OCI-LY7 (cell line): ENCODE measurements at regions of chr9 and their contacts with region 1.

Region 1: DNA sequence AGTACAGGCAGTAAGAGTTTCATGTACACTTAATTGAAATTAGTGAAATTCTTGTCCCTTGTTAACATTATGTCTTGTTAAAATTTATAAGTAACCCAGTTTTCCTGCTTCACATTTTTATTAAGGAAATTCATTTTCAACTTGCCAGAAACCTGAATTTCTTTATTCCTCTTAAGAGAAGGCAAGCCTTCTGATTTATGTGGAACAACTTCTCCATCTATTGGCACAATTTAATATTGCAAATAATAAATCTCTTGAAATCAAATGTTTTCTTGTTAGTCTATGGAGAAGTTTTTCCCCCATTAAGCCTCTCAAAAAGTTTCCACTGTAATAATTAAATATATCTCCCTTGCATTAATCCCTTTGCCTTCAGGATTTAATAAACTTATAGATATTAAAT is 33.8 kb upstream of the ACO1 start:
- DNase-seq: peak; percentile 18
- H3K4me3 ChIP-seq: no peak overlapping the region
- H3K27ac ChIP-seq: no peak overlapping the region
- H3K4me1 ChIP-seq: no peaks in the 10 kb centered on the region
- CTCF ChIP-seq: peak; percentile 75

Region 2: DNA sequence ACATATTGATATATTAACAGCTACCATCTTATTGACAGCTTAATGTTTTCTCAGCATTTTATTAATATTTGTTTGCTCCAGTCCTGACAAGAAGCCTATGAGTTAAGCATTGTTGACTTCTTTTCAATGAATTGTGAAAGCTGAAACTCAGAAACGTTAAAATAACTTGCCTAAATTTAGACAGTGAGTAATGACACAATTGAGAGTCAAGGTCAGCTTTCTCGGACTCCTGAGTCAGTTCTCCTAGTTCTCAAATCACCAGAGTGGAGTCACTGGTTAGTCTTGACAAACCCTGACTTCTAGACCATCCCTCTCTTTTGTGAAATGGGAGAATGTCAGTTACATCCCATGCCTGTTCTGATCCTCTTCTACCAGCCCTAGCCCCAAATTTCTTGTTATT is 189.0 kb before region 1 on chr9:
- CTCF ChIA-PET with region 1: no interaction called
- POLR2A ChIA-PET with region 1: no interaction called
- intact Hi-C with region 1: no loop called
- DNase-seq: no peak
- H3K4me3 ChIP-seq: no peak overlapping the region
- H3K27ac ChIP-seq: no peak overlapping the region
- H3K4me1 ChIP-seq: no peaks in the 10 kb centered on the region
- CTCF ChIP-seq: no peak

Region 3: DNA sequence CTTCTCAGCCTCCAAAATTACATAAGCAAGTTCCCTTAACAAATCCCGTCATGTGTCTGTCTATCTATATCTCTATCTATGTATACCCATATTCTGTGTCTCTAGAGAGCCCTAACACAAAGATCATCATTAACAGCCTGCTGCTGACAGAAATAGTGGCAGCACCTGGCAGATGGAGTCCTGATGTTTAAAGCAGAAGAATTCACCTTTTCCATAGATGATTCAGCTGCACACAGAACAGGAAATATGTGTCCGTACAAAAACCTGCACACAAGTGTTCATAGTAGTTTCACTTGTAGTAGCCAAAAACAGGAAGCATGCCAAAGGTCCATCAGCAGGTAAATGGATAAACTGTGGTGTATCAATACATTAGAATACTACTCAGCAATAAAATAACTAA is 11.3 kb before region 1 on chr9:
- CTCF ChIA-PET with region 1: no interaction called
- POLR2A ChIA-PET with region 1: no interaction called
- intact Hi-C with region 1: no loop called
- DNase-seq: peak; percentile 7
- H3K4me3 ChIP-seq: no peak overlapping the region
- H3K27ac ChIP-seq: no peak overlapping the region
- H3K4me1 ChIP-seq: peaks cover 10% of the 10 kb centered on the region
- CTCF ChIP-seq: no peak

Region 4: GRCh38 chr9:32472344-32472743 is 121.7 kb after region 1 on chr9:
- CTCF ChIA-PET with region 1: no interaction called
- POLR2A ChIA-PET with region 1: no interaction called
- intact Hi-C with region 1: loop called (anchors 10 kb)
- DNase-seq: no peak
- H3K4me3 ChIP-seq: no peak overlapping the region
- H3K27ac ChIP-seq: no peak overlapping the region
- H3K4me1 ChIP-seq: no peaks in the 10 kb centered on the region
- CTCF ChIP-seq: no peak

Region 5: DNA sequence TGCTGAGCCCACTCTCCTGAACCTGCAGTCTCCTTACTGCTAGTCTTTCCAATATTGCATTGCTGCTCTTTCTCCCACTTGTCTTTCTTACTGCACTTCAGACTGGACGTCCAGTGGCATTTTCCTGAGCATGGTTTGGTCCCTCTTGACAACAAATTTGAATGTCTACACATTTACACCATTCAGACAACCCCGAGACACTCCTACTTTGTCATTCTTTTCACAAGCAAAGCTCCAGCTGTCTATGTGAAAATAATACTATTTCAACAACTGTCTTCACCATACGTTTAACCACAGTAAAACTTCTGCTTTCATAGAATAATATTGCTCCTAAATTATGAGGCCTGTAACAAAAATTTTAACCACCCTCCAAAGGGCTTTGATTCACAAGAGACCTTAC is 661.1 kb after region 1 on chr9:
- CTCF ChIA-PET with region 1: no interaction called
- POLR2A ChIA-PET with region 1: no interaction called
- intact Hi-C with region 1: no loop called
- DNase-seq: no peak
- H3K4me3 ChIP-seq: no peak overlapping the region
- H3K27ac ChIP-seq: no peak overlapping the region
- H3K4me1 ChIP-seq: no peaks in the 10 kb centered on the region
- CTCF ChIP-seq: no peak